PC-9 (cell line): ENCODE measurements at regions of chr2 and their contacts with region 1.

Region 1: DNA sequence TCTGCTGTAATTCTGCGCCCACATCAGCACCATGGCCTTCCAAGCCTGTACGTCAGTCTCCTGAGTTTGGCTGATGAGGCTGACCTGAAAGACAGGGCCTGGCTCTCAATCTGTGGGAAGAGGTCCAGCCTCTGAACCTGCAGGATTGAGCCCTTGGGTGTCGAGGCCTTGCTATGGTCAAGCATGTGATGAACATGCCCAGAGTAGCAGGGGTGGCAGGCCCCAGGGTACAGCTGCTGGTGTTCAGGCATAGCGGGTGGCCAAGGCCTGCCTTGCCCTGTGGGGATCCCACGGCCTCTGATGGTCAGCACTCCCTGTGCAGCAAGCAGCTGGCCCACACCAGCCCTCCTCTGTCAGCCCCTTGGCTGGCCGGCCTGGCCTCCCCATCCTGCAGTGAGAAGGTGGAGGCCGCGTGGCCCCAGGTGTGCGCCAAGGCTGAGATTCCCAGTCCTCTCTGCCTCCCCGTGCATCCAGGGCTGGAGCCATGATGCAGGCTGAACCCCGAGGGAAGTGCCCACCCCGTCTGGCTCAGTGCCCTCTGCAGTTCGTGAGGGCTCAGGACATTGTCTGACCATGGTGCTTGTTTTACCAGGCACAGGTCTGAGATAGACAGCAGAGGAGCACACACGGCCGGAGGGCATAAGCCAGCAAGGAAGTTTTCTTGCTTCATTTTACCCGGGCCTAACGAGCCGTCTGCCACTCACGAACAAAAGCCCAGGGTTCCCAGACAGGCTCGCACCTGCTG is 298.3 kb downstream of the NDUFA10 start:
- DNase-seq: no peak
- H3K4me3 ChIP-seq: no peak overlapping the region
- H3K27ac ChIP-seq: no peak overlapping the region
- H3K4me1 ChIP-seq: no peaks in the 10 kb centered on the region
- H3K27me3 ChIP-seq: peaks cover 99% of the 10 kb centered on the region
- CTCF ChIP-seq: no peak

Region 2: DNA sequence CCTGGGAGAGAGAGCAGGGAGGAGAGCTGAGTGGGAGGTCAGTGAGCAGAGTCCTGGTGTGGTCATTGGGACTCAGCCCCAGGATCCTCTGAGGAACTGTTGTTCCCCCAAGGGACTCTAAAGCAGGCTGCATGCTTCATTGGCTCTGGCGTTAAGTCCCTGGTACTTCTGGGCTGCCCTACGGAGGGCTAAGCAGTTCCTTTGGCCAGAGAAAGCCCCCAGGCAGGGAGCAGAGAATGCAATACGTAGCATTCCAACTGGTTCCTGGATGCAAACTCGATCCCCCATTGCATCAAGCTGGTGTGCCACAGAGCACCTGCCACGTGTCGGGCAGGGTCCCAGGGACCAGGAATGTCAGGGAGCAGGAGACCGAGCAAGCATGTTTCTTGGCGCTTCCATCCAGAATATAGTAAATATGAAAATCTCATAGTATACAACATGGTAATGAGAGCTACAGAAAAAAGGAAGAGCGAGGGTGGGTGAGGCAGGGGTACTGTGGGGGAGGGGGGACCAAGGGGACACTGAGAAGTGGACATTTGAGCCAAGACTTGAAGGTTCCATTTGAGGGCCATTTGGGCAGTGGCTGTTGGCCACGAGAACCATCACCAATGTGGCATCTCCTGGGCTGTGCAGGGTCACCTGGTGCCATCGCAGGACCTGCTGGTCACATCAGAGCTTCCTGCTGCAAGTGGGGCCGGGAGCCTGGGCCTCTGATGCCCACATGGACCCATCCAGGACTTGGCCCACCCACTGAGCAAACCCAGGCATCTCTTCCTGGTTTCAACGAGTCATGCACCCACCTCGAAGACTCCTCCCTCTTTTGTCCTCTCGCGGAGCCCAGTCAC is 1139.7 kb before region 1 on chr2:
- CTCF ChIA-PET with region 1: interaction called, 11 read pairs
- POLR2A ChIA-PET with region 1: no interaction called
- intact Hi-C with region 1: no loop called
- DNase-seq: no peak
- H3K4me3 ChIP-seq: no peak overlapping the region
- H3K27ac ChIP-seq: no peak overlapping the region
- H3K4me1 ChIP-seq: no peaks in the 10 kb centered on the region
- H3K27me3 ChIP-seq: peaks cover 70% of the 10 kb centered on the region
- CTCF ChIP-seq: no peak